Activated T-helper 1 cell treated with anti-CD3 and anti-CD28 coated beads, Interleukin-12 subunit alpha, Interleukin-12 subunit beta, Interleukin-2, Interleukin-4 antibody, amounts not matched to agents 30 ng/mL and 10 ng/mL and 1 ng/mL, durations not matched to agents 14 hours and 24 hours and 36 hours (primary cell): ENCODE measurements at regions of chr2 and their contacts with region 1.

Region 1: DNA sequence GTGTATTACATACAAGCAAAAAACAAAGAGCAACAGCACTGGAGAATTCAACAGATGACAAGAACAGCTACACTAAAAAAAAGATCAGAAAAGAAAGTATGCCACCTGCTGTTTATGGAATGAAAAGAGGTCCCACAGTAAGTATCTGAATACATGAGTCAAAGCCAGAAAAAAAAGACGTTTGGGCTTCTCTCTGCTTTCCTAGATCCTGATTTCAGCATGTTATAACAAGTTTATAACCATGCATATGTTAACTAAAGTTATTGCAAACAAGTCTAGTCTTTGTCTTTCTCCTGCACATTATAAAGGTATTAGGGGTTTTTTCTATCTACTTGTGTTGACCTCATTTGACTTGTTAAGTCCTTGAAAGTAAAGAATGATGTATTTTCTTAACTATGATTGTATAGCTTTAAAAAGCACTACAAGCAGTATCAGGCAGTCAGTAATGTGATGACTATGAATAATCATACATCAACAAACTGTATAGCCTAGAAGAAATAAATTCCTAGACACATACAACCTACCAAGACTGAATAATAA is 108.5 kb upstream of the COL5A2 start:
- DNase-seq: no peak
- H3K4me3 Mint-ChIP-seq: no peak overlapping the region
- H3K27ac Mint-ChIP-seq: no peak overlapping the region
- H3K4me1 Mint-ChIP-seq: peaks cover 14% of the 10 kb centered on the region
- H3K27me3 Mint-ChIP-seq: peaks cover 2% of the 10 kb centered on the region

Region 2: DNA sequence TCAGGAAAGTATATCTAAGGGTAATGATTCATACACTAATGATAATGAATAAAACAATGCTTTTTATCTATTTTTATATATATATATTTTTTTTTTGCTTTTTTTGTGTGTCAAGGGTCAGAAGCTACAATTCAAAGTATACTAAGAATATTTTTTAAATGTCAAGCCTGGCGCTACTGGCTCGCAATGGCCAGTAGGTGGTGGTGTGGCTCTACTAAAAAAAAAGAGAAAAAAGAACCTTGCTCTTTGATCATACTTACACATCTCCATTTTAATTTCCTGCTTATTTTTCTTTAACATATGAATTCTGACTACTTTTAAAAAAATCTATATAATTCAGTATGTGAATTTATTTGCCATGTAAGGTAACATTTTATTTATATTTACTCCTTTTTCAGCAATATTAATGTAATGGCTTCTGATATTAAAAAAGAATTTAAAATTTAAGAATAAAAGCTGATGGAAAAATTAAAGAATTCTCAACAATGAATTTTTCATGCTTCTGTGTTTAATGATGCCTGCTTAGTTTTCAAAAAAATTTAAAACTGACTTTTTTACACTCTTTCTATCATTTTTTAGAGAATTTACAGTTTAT is 763.4 kb before region 1 on chr2:
- intact Hi-C with region 1: loop called (anchors 5 kb)
- DNase-seq: no peak
- H3K4me3 Mint-ChIP-seq: no peak overlapping the region
- H3K27ac Mint-ChIP-seq: no peak overlapping the region
- H3K4me1 Mint-ChIP-seq: no peaks in the 10 kb centered on the region
- H3K27me3 Mint-ChIP-seq: peaks cover 2% of the 10 kb centered on the region

Region 3: GRCh38 chr2:189096769-189097447 is 191.1 kb before region 1 on chr2:
- intact Hi-C with region 1: loop called (anchors 1 kb)
- DNase-seq: no peak
- H3K4me3 Mint-ChIP-seq: no peak overlapping the region
- H3K27ac Mint-ChIP-seq: no peak overlapping the region
- H3K4me1 Mint-ChIP-seq: no peaks in the 10 kb centered on the region
- H3K27me3 Mint-ChIP-seq: no peaks in the 10 kb centered on the region

Region 4: GRCh38 chr2:189142893-189143759 is 144.9 kb before region 1 on chr2:
- intact Hi-C with region 1: loop called (anchors 1 kb)
- DNase-seq: peak; percentile 5
- H3K4me3 Mint-ChIP-seq: no peak overlapping the region
- H3K27ac Mint-ChIP-seq: no peak overlapping the region
- H3K4me1 Mint-ChIP-seq: no peaks in the 10 kb centered on the region
- H3K27me3 Mint-ChIP-seq: no peaks in the 10 kb centered on the region

Region 5: DNA sequence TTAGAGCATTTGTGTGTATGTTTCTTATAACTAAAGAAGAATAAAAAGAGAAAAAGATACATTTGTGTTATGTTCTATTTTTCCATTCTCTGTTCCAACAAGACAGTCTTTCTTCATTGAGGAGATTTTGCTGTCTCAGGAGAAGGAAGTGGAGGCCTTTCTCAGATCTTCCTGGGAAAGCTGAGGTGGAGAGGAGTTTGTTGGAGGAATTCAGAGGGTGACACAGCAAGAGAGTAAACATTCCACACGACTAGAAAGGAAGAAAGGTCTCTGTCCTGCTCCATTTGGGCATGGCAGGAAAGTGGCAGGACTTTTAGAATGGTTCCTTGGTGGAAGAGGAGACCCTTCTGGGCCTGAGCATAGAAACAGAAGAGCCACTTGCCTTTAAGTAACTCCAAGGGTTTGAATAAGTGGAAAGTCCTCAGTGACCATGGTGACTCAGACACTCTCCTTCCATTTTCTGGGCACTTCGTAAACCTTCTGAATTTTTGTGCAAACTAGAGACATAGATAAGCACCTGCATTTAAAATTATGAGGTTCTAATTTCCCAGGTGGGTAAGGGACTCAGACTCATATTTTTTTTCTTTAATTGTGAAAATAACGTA is 56.2 kb before region 1 on chr2:
- intact Hi-C with region 1: no loop called
- DNase-seq: no peak
- H3K4me3 Mint-ChIP-seq: no peak overlapping the region
- H3K27ac Mint-ChIP-seq: no peak overlapping the region
- H3K4me1 Mint-ChIP-seq: no peaks in the 10 kb centered on the region
- H3K27me3 Mint-ChIP-seq: no peaks in the 10 kb centered on the region

Region 6: DNA sequence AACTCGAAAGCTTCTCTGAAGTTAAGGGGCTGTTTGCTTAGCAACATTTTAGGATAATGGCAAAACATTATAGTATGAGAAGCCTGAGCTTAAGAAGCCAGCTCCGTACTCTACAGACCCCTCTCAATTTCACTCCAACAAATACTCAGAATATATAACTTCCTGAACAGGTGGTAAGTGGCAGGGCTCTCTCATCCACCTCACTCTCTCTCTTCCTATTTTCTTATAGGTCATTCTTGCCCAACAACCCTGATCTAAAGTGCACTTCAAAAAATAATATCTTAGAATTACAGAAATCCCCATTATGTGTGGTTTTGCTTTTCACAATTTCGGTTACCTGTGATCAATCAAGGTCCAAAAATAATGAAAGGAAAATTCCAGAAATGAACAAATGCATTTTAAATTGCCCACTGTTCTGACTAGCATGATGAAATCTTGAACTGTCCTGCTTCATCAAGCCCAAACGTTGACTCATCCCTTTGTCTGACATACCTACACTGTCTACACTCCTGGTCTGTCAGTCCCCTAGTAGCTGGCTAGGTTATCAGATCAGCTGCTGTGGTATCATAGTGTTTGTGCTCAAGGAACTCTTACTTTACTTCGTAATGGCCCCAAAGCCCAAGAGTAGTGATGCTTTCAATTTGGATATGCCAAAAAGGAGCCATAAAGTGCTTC is 14.4 kb after region 1 on chr2:
- intact Hi-C with region 1: loop called (anchors 1 kb)
- DNase-seq: no peak
- H3K4me3 Mint-ChIP-seq: no peak overlapping the region
- H3K27ac Mint-ChIP-seq: no peak overlapping the region
- H3K4me1 Mint-ChIP-seq: peaks cover 62% of the 10 kb centered on the region
- H3K27me3 Mint-ChIP-seq: no peaks in the 10 kb centered on the region

Region 7: GRCh38 chr2:189412330-189412953 is 124.4 kb after region 1 on chr2:
- intact Hi-C with region 1: loop called (anchors 1 kb)
- DNase-seq: peak; percentile 14
- H3K4me3 Mint-ChIP-seq: no peak overlapping the region
- H3K27ac Mint-ChIP-seq: no peak overlapping the region
- H3K4me1 Mint-ChIP-seq: peaks cover 9% of the 10 kb centered on the region
- H3K27me3 Mint-ChIP-seq: no peaks in the 10 kb centered on the region